ENCODE measurements at regions of chr19 and their contacts with region 1.

Region 1: DNA sequence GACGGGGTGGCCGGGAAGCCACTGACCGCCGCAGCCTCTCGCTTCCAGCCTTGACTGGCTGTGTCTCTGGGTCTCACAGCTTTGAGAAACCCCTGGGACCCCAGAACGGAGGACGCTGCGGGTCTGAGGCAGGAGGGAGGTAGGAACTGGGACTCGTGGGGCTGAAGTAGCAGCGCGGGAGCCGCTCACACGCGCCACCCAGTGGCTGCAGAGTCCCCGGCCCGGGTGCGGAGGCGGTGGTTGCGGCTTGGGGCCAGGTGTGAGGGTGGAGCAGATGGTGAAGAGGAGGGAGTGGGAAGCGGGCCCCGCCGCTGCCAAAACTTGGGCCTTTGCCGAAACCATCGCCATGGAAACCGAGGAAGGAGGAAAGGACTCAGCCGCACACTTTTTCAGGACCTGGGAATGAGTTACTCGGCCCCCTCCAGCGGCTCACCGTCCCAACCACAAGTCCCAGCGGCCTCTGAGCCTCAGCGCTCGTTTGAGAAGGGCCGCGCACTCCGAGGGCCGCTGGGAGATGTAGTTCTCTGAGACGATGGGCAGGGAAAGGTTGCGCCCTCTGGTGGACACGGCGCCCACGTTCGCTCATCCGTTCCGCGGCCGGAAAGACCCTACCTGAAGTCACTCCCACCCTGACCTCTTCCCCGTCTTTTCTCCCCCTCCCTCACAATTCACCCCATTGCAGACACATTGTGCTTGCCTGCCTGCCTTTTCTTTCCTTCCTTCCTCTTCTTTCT is 2.2 kb upstream of the SLC17A7 start:
- DNase-seq: peak; percentile 97
- ATAC-seq: peak; percentile 91

Region 2: DNA sequence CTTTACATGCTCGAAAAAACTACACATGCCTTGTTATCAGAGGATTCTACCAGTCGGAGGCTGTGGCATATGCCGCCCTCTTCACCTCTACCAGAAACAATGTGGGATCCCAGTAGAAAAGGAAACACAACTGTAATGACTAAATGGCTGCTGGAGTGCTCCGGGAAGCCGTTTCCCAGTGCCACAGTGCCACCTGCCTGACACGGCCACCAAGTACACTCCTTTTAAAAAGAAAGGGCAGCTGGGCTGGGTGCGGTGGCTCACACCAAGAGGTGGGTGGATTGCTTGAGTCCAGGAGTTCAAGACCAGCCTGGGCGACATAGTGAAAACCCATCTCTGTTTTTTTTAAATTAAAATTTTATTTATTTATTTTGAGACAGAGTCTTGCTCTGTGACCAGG is 218.7 kb before region 1 on chr19:
- intact Hi-C with region 1: loop called (anchors 5 kb)
- DNase-seq: no peak
- ATAC-seq: peak; percentile 85

Region 3: DNA sequence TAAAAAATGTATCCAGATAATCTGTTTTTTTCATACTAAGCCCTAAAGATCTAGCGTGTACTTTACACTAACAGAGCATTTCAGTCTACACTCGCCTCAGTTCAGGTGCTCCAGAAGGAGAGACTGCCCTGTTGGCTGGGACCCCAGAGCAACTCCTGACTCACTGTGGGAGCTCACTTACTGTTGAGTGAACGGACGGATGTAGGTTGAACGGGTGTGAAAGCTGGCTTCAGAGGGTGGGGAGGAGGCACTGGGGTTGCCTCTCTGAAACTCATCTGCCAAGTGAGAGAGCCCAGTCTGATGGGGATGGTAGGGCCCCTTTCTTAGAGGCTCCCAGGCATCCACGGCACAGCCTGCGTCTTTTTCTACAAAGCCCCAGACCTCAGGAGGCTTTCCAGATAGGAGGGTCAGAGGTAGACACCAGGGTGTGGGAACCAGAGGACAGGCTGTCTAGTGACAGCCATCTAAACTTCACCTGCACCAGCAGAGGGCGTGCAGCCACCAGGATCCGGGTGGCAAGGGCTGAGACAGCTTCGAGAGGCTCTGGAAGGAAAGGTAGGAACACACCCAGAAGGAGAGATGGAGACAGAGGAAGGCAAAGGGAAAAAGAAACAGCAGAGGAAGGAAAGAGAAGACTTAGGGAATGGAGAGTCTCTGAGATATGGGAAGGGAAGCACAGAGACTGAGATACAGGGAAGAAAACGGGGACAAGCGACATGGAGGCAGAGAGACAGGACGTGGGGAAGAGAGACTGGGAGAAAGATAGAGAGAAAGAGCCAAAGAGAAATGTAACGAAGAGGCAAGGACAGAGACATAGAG is 51.7 kb before region 1 on chr19:
- intact Hi-C with region 1: loop called (anchors 2 kb)
- DNase-seq: peak; percentile 85
- ATAC-seq: peak; percentile 90

Measured in Right ventricle myocardium superior (tissue), 1 donor.